HEK293T (cell line): ENCODE measurements at regions of chr4 and their contacts with region 1.

Region 1: GRCh38 chr4:139177868-139178611 is 1.0 kb upstream of the ELF2 start:
- DNase-seq: peak; percentile 88

Region 2: GRCh38 chr4:139188648-139189416 is 10.8 kb after region 1 on chr4:
- CTCF ChIA-PET with region 1: interaction called, 9 read pairs
- POLR2A ChIA-PET with region 1: interaction called, 10 read pairs
- DNase-seq: no peak